Activated CD4-positive, alpha-beta T cell treated with anti-CD3 and anti-CD28 coated beads for 36 hours (primary cell): ENCODE measurements at regions of chr17 and their contacts with region 1.

Region 1: DNA sequence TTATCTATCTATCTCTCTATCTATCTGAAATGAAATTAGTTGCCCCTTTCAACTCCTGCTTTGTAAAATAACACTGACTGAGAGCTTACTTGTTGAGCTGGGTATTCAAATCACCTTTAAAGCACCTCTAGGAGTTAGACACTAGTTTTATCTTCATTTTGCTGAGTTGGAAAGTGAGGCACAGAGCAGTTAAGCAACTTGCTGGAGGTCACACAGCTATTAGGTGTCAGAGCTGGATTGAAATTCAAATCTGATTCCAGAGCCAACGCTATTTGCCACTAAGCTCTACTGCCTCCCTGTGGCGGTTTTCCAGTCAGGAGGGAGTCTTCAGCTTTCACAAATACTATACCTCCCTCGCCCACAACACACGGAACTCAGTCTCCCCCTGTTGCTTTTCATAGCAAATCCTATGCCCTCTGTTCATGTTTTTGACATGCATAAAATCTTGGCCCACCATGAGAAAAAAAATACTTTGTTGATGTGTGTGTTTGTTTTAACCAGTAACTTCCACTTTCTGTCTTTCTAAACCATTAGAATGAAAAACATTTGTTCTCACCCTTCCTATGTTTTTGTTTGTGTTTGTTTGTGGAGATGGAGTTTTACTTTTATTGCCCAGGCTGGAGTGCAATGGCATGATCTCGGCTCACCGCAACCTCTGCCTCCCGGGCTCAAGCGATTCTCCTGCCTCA is 74.8 kb upstream of the SMURF2 start:
- DNase-seq: peak; percentile 73
- ATAC-seq: peak; percentile 91
- H3K4me3 Mint-ChIP-seq: no peak overlapping the region
- H3K27ac Mint-ChIP-seq: no peak overlapping the region
- H3K4me1 Mint-ChIP-seq: peaks cover 9% of the 10 kb centered on the region
- H3K27me3 Mint-ChIP-seq: no peaks in the 10 kb centered on the region

Region 2: DNA sequence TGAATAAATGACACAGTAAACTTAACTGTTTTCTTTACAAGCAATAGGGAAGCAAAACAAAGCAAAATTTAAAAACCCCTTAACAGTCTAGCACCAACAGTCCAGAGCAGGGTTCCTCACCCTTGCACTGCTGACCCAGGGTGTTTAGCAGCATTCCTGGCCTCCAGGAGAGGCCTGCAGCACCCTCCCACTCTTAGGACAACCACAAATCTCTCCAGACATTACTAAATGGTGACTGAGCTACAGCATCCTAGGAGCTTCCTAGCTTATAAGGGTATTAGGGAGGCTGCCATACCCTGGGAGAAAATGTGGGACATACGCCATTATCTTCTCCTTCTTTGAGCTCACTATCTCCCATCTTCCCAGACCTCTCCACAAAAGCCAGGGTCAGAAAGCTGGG is 256.0 kb before region 1 on chr17:
- CTCF ChIA-PET with region 1: no interaction called
- POLR2A ChIA-PET with region 1: no interaction called
- intact Hi-C with region 1: no loop called
- DNase-seq: no peak
- ATAC-seq: no peak
- H3K4me3 Mint-ChIP-seq: no peak overlapping the region
- H3K27ac Mint-ChIP-seq: no peak overlapping the region
- H3K4me1 Mint-ChIP-seq: peaks cover 4% of the 10 kb centered on the region
- H3K27me3 Mint-ChIP-seq: no peaks in the 10 kb centered on the region

Region 3: DNA sequence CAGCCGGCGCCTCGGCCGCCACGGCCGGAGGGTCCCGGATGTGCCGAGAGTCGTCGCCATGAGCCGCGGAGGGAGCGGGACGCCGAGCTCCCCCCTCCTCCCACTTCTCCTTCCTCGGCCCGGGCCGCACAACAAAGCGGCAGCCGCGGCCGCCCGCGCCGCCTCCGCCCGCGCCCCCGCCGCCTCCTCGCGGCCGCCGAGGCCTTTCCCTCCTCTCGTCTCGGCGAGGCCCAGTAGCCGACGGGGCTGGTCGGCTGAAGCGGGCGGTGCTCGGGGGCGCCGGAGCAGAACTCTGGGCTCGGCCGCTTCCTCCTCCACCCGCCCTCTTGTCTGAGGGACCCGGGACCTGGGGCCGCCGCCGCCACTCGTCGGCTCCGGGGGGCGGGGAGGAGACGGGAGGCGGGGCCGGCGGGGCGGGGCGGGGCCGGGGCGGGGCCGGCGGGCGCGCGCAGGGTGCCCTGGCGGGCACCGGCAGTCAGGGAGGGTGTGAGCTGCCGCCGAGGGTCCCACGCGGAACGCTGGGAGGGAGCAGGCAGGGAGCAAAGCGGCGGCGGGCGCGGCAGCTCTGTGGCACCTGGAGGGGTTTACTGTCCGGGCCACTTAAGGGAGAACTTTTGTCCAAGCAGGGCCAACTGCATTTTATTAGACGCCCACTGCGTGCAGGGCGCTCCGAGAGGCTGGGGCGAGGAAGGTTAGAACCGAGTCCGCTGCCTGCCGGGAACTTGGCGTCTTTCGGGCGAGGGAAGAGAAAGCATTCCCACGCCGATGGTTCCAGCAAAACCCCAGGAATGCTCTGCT is 74.8 kb before region 1 on chr17 and contains the start of gene SMURF2:
- CTCF ChIA-PET with region 1: no interaction called
- POLR2A ChIA-PET with region 1: no interaction called
- intact Hi-C with region 1: loop called (anchors 2 to 10 kb)
- DNase-seq: peak; percentile 89
- ATAC-seq: peak; percentile 82
- H3K4me3 Mint-ChIP-seq: peak within 1 kb of the TSS; percentile 98
- H3K27ac Mint-ChIP-seq: peak within 1 kb of the TSS; percentile 92
- H3K4me1 Mint-ChIP-seq: peaks cover 27% of the 10 kb centered on the region
- H3K27me3 Mint-ChIP-seq: no peaks in the 10 kb centered on the region
- total RNA-seq, gene SMURF2: 13.9 to 15.0 TPM

Region 4: GRCh38 chr17:65370669-65371131 is 633.8 kb after region 1 on chr17:
- CTCF ChIA-PET with region 1: no interaction called
- POLR2A ChIA-PET with region 1: no interaction called
- intact Hi-C with region 1: no loop called
- DNase-seq: no peak
- ATAC-seq: no peak
- H3K4me3 Mint-ChIP-seq: no peak overlapping the region
- H3K27ac Mint-ChIP-seq: no peak overlapping the region
- H3K4me1 Mint-ChIP-seq: peaks cover 22% of the 10 kb centered on the region
- H3K27me3 Mint-ChIP-seq: peaks cover 8% of the 10 kb centered on the region